Ascending aorta (tissue), 2 donors: ENCODE measurements at regions of chr1 and their contacts with region 1.

Region 1: GRCh38 chr1:45266151-45266801 is 59.9 kb upstream of the ZSWIM5 start:
- DNase-seq: peak in 1 of 2 donors; percentile 69
- H3K4me3 ChIP-seq: no peak overlapping the region
- H3K27ac ChIP-seq: peak overlapping the region; percentile 79 to 81
- H3K4me1 ChIP-seq: peaks cover 4 to 19% of the 10 kb centered on the region in 2 donors
- H3K27me3 ChIP-seq: no peaks in the 10 kb centered on the region
- CTCF ChIP-seq: no peak

Region 2: DNA sequence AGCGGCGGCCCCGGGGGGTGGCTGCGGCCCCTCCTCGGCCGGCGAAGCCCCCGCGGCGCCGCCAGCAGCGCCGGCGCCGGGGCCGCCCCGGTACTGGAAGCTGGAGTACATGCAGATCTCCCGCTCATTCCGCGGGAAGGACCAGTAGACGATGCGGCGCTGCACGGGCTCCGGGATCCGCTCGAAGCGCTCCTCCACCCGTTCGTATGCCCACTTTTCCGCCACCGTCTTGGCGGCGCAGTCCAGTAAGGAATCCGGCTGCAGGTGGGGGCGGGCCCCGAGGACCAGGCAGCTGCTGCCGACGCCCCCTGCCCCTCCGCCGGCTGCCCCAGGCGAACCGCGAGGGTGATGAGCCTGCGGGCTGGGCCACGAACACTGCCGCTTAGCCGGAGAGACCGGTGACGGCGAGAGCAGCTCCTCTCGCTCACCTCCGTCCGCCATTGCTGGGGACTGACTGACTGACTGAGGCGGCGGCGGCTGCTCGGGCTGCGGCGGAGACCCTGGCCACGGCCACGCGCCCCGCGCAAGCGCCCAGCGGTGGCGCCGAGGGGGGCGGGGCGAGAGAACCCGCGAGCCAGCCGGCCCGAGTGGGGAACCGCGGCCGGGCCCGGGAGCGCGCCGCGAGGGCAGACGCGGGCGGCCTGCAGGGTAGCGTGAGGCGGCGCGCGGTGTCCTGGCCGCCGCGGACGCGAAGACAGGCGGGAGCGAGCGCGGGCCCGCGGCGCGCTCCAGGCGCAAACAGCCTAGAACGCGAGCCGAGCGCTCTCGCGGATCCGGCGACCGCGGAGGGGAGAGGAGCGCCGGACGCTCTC is 60.2 kb before region 1 on chr1 and contains the start of gene ZSWIM5:
- intact Hi-C with region 1: loop called (anchors 5 kb)
- DNase-seq: peak in 1 of 2 donors; percentile 76
- H3K4me3 ChIP-seq: peak within 1 kb of the TSS; percentile 71 to 95
- H3K27ac ChIP-seq: peak within 1 kb of the TSS; percentile 73 to 82
- H3K4me1 ChIP-seq: peaks cover 0 to 7% of the 10 kb centered on the region in 2 donors
- H3K27me3 ChIP-seq: no peaks in the 10 kb centered on the region
- CTCF ChIP-seq: no peak
- total RNA-seq, gene ZSWIM5: 1.2 TPM

Region 3: GRCh38 chr1:45317166-45317565 is 50.9 kb after region 1 on chr1:
- intact Hi-C with region 1: no loop called
- DNase-seq: no peak
- H3K4me3 ChIP-seq: no peak overlapping the region
- H3K27ac ChIP-seq: no peak overlapping the region
- H3K4me1 ChIP-seq: no peaks in the 10 kb centered on the region
- H3K27me3 ChIP-seq: no peaks in the 10 kb centered on the region
- CTCF ChIP-seq: no peak

Region 4: GRCh38 chr1:45854724-45855123 is 588.4 kb after region 1 on chr1:
- intact Hi-C with region 1: no loop called
- DNase-seq: no peak
- H3K4me3 ChIP-seq: no peak overlapping the region
- H3K27ac ChIP-seq: no peak overlapping the region
- H3K4me1 ChIP-seq: no peaks in the 10 kb centered on the region
- H3K27me3 ChIP-seq: no peaks in the 10 kb centered on the region
- CTCF ChIP-seq: no peak